Transverse colon (tissue), 4 donors: ENCODE measurements at regions of chr21 and their contacts with region 1.

Region 1: DNA sequence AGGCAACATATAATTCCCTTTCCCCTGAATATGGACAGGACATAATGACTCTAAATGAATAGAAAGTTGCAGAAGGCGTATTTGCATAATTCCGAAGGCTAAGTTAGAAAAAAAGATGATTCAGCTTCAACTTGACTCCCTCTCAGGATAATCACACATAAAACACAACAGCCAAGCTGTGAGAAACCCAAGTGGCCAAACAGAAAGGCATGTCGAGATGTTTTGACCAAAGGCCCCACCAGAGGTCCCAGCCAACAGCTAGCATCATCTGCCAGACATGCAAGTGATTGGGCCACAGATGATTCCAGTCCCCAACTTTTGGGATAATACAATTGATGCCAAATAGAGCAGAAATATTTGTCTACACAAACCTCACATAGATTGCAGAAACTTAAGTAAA is 444.9 kb downstream of the LTN1 start:
- DNase-seq: no peak
- H3K4me3 ChIP-seq: no peak overlapping the region
- H3K27ac ChIP-seq: no peak overlapping the region
- H3K4me1 ChIP-seq: no peaks in the 10 kb centered on the region
- H3K27me3 ChIP-seq: no peaks in the 10 kb centered on the region
- CTCF ChIP-seq: no peak
- EP300 ChIP-seq: no peak
- POLR2A ChIP-seq: no peak

Region 2: GRCh38 chr21:28480470-28480869 is 67.3 kb before region 1 on chr21:
- in situ Hi-C with region 1: no loop called
- intact Hi-C with region 1: loop called (anchors 5 kb)
- DNase-seq: no peak
- H3K4me3 ChIP-seq: no peak overlapping the region
- H3K27ac ChIP-seq: no peak overlapping the region
- H3K4me1 ChIP-seq: no peaks in the 10 kb centered on the region
- H3K27me3 ChIP-seq: no peaks in the 10 kb centered on the region
- CTCF ChIP-seq: no peak
- EP300 ChIP-seq: no peak
- POLR2A ChIP-seq: no peak